ENCODE measurements at regions of chr17 and their contacts with region 1.

Region 1: GRCh38 chr17:1331708-1332107 is 52.2 kb downstream of the TRARG1 start:
- DNase-seq: peak; percentile 26 to 62 (median 43)
- ATAC-seq: peak; percentile 85
- H3K4me3 ChIP-seq: no peak overlapping the region
- H3K27ac ChIP-seq: no peak overlapping the region; the same call in 2 of the 3 replicates
- H3K4me1 ChIP-seq: peaks cover 0 to 4% of the 10 kb centered on the region in 2 experiments; a peak in 2 of 5 replicates
- H3K27me3 ChIP-seq: no peaks in the 10 kb centered on the region; a peak in 1 of 5 replicates
- CTCF ChIP-seq: no peak
- EP300 ChIP-seq: peak; percentile 35; the same call in 1 of the 2 replicates
- POLR2A ChIP-seq: no peak
- RAD21 ChIP-seq: peak in 1 of 2 experiments; percentile 20; a peak in 1 of 4 replicates

Region 2: GRCh38 chr17:1179112-1179817 is 152.4 kb before region 1 on chr17:
- CTCF ChIA-PET with region 1: no interaction called
- POLR2A ChIA-PET with region 1: no interaction called
- in situ Hi-C with region 1: no loop called
- intact Hi-C with region 1: no loop called
- DNase-seq: peak in 1 of 4 experiments; percentile 17
- ATAC-seq: peak; percentile 74
- H3K4me3 ChIP-seq: peak overlapping the region; percentile 26
- H3K27ac ChIP-seq: no peak overlapping the region
- H3K4me1 ChIP-seq: peaks cover 0 to 18% of the 10 kb centered on the region in 2 experiments; a peak in 2 of 5 replicates
- H3K27me3 ChIP-seq: peaks cover 9 to 47% of the 10 kb centered on the region in 2 experiments; a peak in 3 of 5 replicates
- CTCF ChIP-seq: no peak
- EP300 ChIP-seq: no peak
- POLR2A ChIP-seq: no peak
- RAD21 ChIP-seq: no peak

Region 3: GRCh38 chr17:1260086-1260769 is 71.5 kb before region 1 on chr17:
- CTCF ChIA-PET with region 1: interaction called, 20 read pairs
- POLR2A ChIA-PET with region 1: interaction called, 3 read pairs
- in situ Hi-C with region 1: loop called (anchors 5 kb)
- intact Hi-C with region 1: loop called (anchors 1 kb)
- DNase-seq: no peak
- ATAC-seq: no peak
- H3K4me3 ChIP-seq: peak overlapping the region; percentile 41
- H3K27ac ChIP-seq: no peak overlapping the region
- H3K4me1 ChIP-seq: peaks cover 0 to 12% of the 10 kb centered on the region in 2 experiments; a peak in 3 of 5 replicates
- H3K27me3 ChIP-seq: peaks cover 0 to 4% of the 10 kb centered on the region in 2 experiments; a peak in 2 of 5 replicates
- CTCF ChIP-seq: no peak
- EP300 ChIP-seq: no peak
- POLR2A ChIP-seq: no peak
- RAD21 ChIP-seq: no peak

Region 4: GRCh38 chr17:1267471-1267947 is 64.2 kb before region 1 on chr17:
- CTCF ChIA-PET with region 1: no interaction called
- POLR2A ChIA-PET with region 1: interaction called, 6 read pairs
- in situ Hi-C with region 1: no loop called
- intact Hi-C with region 1: loop called (anchors 2 kb)
- DNase-seq: peak in 1 of 4 experiments; percentile 17
- ATAC-seq: no peak
- H3K4me3 ChIP-seq: peak overlapping the region; percentile 48
- H3K27ac ChIP-seq: no peak overlapping the region; the same call in 2 of the 3 replicates
- H3K4me1 ChIP-seq: peaks cover 2 to 24% of the 10 kb centered on the region in 2 experiments; a peak in 4 of 5 replicates
- H3K27me3 ChIP-seq: no peaks in the 10 kb centered on the region
- CTCF ChIP-seq: no peak
- EP300 ChIP-seq: no peak
- POLR2A ChIP-seq: no peak
- RAD21 ChIP-seq: no peak

Region 5: DNA sequence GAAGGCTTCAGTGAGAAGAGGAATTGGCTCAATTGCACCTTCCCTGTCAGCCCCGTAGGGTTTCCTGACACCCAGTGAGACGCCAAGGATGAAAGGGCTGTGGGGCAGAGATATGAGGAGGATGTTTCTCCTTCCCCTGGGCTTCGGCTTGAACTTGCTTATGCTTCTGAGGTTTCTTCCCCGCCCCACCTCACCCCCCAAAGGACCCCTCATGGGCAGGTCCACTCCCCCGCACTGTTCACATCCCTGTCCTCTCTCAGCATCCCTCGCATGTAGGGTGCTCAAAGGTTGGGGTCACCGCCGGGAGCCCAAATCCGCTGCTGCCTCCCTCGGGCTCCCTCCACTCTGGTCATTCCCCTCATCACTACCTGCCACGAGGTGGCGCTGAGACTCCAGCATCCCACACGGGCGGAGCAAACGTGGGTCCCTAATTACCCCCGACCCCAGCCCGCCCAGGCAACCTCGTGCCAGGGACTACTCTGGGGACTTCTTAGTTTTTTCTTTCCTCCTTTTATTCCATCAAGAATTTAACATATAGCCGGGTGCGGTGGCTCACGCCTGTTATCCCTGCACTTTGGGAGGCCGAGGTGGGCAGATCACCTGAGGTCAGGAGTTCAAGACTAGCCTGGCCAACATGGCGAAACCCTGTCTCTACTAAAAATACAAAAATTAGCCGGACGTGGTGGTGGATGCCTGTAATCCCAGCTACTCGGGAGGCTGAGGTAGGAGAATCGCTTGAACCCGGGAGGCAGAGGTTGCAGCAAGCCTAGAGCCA is 55.6 kb before region 1 on chr17:
- CTCF ChIA-PET with region 1: interaction called, 20 read pairs
- POLR2A ChIA-PET with region 1: interaction called, 3 read pairs
- in situ Hi-C with region 1: no loop called
- intact Hi-C with region 1: loop called (anchors 2 kb)
- DNase-seq: peak; percentile 60 to 65 (median 62)
- ATAC-seq: peak; percentile 92
- H3K4me3 ChIP-seq: no peak overlapping the region
- H3K27ac ChIP-seq: no peak overlapping the region
- H3K4me1 ChIP-seq: peaks cover 0 to 14% of the 10 kb centered on the region in 2 experiments; a peak in 2 of 5 replicates
- H3K27me3 ChIP-seq: peaks cover 0 to 28% of the 10 kb centered on the region in 2 experiments; a peak in 4 of 5 replicates
- CTCF ChIP-seq: peak; percentile 62 to 75 (median 74)
- EP300 ChIP-seq: no peak
- POLR2A ChIP-seq: no peak
- RAD21 ChIP-seq: peak; percentile 52 to 78

Region 6: GRCh38 chr17:1286379-1287106 is 45.2 kb before region 1 on chr17:
- CTCF ChIA-PET with region 1: no interaction called
- POLR2A ChIA-PET with region 1: no interaction called
- in situ Hi-C with region 1: no loop called
- intact Hi-C with region 1: no loop called
- DNase-seq: no peak
- ATAC-seq: no peak
- H3K4me3 ChIP-seq: no peak overlapping the region
- H3K27ac ChIP-seq: no peak overlapping the region
- H3K4me1 ChIP-seq: peaks cover 0 to 10% of the 10 kb centered on the region in 2 experiments; a peak in 3 of 5 replicates
- H3K27me3 ChIP-seq: no peaks in the 10 kb centered on the region
- CTCF ChIP-seq: no peak
- EP300 ChIP-seq: no peak
- POLR2A ChIP-seq: no peak
- RAD21 ChIP-seq: no peak